Gastrocnemius medialis (tissue), 4 donors: ENCODE measurements at regions of chr15 and their contacts with region 1.

Region 1: GRCh38 chr15:25095179-25095578 is 140.4 kb downstream of the SNRPN start:
- DNase-seq: no peak
- ATAC-seq: peak; percentile 55 to 68
- H3K4me3 ChIP-seq: no peak overlapping the region
- H3K27ac ChIP-seq: peak overlapping the region in 2 of 4 donors; percentile 46 to 70
- H3K4me1 ChIP-seq: peaks cover 0 to 24% of the 10 kb centered on the region in 2 donors
- H3K27me3 ChIP-seq: no peaks in the 10 kb centered on the region
- CTCF ChIP-seq: no peak
- POLR2A ChIP-seq: no peak

Region 2: GRCh38 chr15:25184356-25185155 is 89.4 kb after region 1 on chr15:
- in situ Hi-C with region 1: no loop called
- intact Hi-C with region 1: no loop called
- DNase-seq: peak in 1 of 2 donors; percentile 4
- ATAC-seq: no peak
- H3K4me3 ChIP-seq: no peak overlapping the region
- H3K27ac ChIP-seq: no peak overlapping the region
- H3K4me1 ChIP-seq: no peaks in the 10 kb centered on the region
- H3K27me3 ChIP-seq: no peaks in the 10 kb centered on the region
- CTCF ChIP-seq: no peak
- POLR2A ChIP-seq: no peak

Region 3: DNA sequence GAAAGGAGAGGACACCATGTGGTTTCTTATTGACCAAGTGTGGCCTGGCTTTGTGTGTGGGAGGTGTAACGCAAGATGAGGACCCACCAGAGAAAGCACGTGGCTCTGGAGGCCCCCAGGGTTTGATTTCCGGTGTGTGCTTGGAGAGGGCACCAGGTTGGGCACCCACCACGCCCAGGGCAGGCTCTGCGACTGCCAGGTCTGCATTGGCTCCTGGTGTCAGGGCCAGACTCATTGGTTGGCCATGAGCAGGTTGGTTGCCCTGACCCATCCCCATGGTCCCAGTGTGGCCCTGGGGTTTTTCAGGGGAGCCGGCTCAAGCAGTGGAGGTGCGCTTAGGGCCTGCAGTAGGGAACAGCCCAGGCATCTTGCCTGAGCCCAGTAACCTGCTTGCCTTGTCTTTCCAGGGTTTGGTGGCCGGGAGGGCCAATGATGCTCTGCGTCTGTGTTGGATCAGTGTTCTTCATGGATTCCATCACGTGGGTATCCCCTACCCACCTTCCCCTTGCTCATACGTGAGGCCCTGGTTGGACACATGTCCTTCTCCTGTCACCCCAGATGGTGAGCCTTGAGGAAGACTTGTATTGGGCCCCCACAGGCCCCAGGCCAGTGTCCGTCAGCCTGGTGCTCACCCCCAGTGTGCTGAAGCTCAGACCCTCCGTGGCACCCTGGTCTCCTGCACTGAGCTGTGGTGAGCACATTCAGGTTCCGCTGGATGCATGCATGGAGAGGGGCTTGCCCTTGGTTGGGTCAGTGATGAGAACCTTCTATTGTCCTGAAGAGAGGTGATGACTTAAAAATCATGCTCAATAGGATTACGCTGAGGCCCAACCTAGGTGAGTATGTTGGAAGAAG is 149.8 kb after region 1 on chr15:
- in situ Hi-C with region 1: no loop called
- intact Hi-C with region 1: no loop called
- DNase-seq: peak in 1 of 2 donors; percentile 5
- ATAC-seq: no peak
- H3K4me3 ChIP-seq: no peak overlapping the region
- H3K27ac ChIP-seq: no peak overlapping the region
- H3K4me1 ChIP-seq: no peaks in the 10 kb centered on the region
- H3K27me3 ChIP-seq: no peaks in the 10 kb centered on the region
- CTCF ChIP-seq: no peak
- POLR2A ChIP-seq: no peak

Region 4: GRCh38 chr15:25763331-25763751 is 668.2 kb after region 1 on chr15:
- in situ Hi-C with region 1: no loop called
- intact Hi-C with region 1: loop called (anchors 5 kb)
- DNase-seq: no peak
- ATAC-seq: no peak
- H3K4me3 ChIP-seq: no peak overlapping the region
- H3K27ac ChIP-seq: no peak overlapping the region
- H3K4me1 ChIP-seq: peaks cover 0 to 4% of the 10 kb centered on the region in 2 donors
- H3K27me3 ChIP-seq: no peaks in the 10 kb centered on the region
- CTCF ChIP-seq: no peak
- POLR2A ChIP-seq: no peak